Activated CD8-positive, alpha-beta T cell treated with anti-CD3 and anti-CD28 coated beads, Interleukin-2, amount 10 ng/mL, durations not matched to agents 7 days and 5 days (primary cell): ENCODE measurements at regions of chr17 and their contacts with region 1.

Region 1: GRCh38 chr17:8745586-8746500 is 1.2 kb upstream of the CCDC42 start:
- DNase-seq: peak; percentile 84
- ATAC-seq: peak; percentile 90
- H3K4me3 Mint-ChIP-seq: peak overlapping the region; percentile 83
- H3K27ac Mint-ChIP-seq: peak overlapping the region; percentile 91
- H3K4me1 Mint-ChIP-seq: peaks cover 18% of the 10 kb centered on the region
- H3K27me3 Mint-ChIP-seq: peaks cover 14% of the 10 kb centered on the region

Region 2: DNA sequence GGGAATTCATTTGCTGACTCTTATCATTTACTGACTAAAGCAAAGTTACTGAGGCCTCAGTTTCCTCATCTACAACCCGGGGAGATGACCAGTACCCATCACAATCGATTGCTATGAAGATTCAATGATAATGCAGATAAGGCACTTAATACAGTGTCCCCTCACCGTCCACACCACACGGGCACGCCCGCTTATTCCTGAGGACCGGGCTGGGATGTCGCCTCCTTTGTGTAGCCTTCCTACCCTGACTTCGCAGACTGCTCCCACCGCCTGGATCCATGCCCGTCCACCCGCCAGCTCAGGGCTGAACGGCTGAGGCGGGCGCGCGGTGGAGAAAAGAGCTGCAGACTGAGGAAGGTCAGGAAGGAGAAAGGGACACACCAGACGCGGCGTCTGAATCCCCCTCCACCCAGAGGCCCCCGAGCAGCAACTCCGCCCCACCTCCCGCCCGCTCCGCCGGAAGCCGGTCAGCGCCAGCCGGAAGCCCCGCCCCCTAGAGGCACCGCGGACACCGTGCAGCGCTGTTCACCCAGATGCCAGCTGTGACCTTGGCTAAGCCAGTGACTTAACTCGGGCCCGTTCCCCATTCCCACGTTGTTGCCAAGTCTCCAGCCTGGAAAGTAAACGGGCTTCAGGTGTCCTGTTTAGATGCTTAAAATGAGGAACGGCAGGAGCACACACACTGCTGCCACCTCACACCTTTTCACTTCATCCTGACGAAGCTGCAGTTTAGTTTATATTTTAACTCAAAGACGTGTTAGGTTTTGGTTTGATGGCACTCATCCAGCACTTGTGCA is 369.4 kb before region 1 on chr17 and contains the start of gene KRABD2:
- CTCF ChIA-PET with region 1: interaction called, 16 read pairs
- POLR2A ChIA-PET with region 1: interaction called, 4 read pairs
- DNase-seq: peak; percentile 94
- ATAC-seq: peak; percentile 97
- H3K4me3 Mint-ChIP-seq: peak within 1 kb of the TSS; percentile 90
- H3K27ac Mint-ChIP-seq: peak within 1 kb of the TSS; percentile 78
- H3K4me1 Mint-ChIP-seq: peaks cover 61% of the 10 kb centered on the region
- H3K27me3 Mint-ChIP-seq: no peaks in the 10 kb centered on the region

Region 3: GRCh38 chr17:8383143-8383822 is 362.6 kb before region 1 on chr17 and contains the start of gene RPL26:
- CTCF ChIA-PET with region 1: interaction called, 15 read pairs
- POLR2A ChIA-PET with region 1: interaction called, 4 read pairs
- DNase-seq: peak; percentile 98
- ATAC-seq: peak; percentile 96
- H3K4me3 Mint-ChIP-seq: peak within 1 kb of the TSS; percentile 99
- H3K27ac Mint-ChIP-seq: peak within 1 kb of the TSS; percentile 96
- H3K4me1 Mint-ChIP-seq: peaks cover 65% of the 10 kb centered on the region
- H3K27me3 Mint-ChIP-seq: no peaks in the 10 kb centered on the region
- total RNA-seq, gene RPL26: 1,633 to 1,747 TPM

Region 4: DNA sequence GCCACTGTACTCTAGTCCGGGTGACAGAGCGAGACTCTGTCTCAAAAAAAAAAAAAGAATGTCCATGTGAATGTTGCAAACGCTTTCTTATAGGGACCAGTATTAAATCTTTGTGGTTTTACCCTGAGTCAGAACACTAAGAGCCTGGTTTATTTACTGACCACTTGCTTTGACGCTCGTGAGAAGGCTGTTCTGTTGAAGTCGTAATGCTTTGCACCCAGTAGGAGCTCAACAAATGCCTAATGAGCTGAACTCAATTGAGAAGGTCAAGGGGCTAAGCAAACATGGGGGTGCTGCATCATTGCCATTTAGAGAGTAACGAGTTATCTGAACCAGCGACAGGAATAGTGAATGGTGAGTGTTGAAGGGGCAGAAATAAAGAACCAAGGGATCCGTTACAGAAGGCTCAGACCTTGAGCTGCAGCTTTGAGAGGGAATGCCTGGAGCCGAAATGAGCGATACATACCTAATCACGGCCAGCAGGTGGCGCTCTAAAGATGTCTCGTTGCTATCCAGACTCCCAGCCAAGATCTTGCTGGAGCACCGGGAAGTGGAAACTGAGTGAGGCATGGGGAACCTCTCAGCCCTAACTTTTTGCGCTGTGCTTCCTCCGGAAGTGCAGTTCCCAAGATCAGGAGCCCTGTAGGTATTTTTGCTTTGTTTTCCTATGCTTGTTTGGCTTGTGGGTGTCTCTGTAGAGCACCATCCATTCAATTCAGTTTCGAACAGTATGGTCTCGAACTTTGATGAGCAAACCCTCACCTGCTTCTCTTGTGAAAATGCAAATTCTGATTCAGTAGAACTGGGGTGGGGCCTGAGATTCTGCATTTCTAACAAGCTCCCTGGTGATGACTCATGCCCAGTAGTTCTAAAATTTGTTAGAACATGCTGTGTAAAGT is 335.6 kb before region 1 on chr17:
- CTCF ChIA-PET with region 1: interaction called, 29 read pairs
- POLR2A ChIA-PET with region 1: interaction called, 3 read pairs
- DNase-seq: peak; percentile 84
- ATAC-seq: peak; percentile 80
- H3K4me3 Mint-ChIP-seq: no peak overlapping the region
- H3K27ac Mint-ChIP-seq: no peak overlapping the region
- H3K4me1 Mint-ChIP-seq: peaks cover 42% of the 10 kb centered on the region
- H3K27me3 Mint-ChIP-seq: peaks cover 22% of the 10 kb centered on the region

Region 5: GRCh38 chr17:8574687-8575086 is 171.2 kb before region 1 on chr17:
- CTCF ChIA-PET with region 1: interaction called, 12 read pairs
- POLR2A ChIA-PET with region 1: no interaction called
- DNase-seq: no peak
- ATAC-seq: no peak
- H3K4me3 Mint-ChIP-seq: no peak overlapping the region
- H3K27ac Mint-ChIP-seq: no peak overlapping the region
- H3K4me1 Mint-ChIP-seq: peaks cover 2% of the 10 kb centered on the region
- H3K27me3 Mint-ChIP-seq: no peaks in the 10 kb centered on the region

Region 6: DNA sequence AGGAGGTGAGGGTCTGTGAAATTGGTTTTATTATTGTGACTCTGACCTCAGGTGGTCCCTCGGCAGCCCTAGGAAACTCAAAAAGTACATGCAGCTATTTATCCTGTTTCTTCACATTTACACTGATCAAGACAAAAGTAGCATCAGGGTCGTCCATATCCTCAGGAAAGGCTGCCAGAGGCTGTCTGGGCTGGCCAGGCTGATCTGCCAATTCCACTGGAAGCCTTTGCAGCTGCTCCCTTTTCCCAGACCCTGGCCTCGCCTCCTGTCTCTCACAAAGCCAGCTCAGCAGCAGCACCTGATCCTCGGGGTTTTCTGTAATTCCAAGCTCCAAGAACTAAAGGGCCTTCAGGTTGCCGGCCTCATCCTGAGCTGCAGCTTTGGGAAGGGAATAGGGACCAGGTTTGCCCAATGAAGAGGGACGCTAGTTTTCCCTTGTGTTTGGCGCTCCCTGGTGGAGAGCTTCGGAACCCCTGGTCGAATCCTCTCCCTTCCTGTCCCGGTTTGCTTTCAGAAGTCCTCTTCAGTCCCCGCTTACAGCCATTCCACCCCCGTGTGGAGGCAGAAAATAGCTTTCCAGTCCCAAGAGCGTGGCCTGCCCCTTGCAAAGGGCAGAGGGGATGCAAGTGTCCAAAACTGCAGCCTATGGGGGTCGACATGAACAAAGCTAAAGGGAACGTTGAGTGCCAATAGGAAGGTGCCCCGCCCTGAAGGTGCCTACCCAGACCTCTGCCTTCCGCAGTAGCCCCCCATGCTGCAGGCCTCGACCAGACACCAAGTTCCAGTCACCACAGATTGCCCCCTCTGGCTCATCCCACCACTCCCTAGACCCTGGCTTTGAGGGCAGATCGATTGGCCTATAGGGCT is 39.9 kb after region 1 on chr17:
- CTCF ChIA-PET with region 1: interaction called, 32 read pairs
- POLR2A ChIA-PET with region 1: no interaction called
- DNase-seq: peak; percentile 71
- ATAC-seq: peak; percentile 55
- H3K4me3 Mint-ChIP-seq: no peak overlapping the region
- H3K27ac Mint-ChIP-seq: no peak overlapping the region
- H3K4me1 Mint-ChIP-seq: peaks cover 17% of the 10 kb centered on the region
- H3K27me3 Mint-ChIP-seq: peaks cover 15% of the 10 kb centered on the region